IMR-90 (cell line): ENCODE measurements at regions of chr1 and their contacts with region 1.

Region 1: DNA sequence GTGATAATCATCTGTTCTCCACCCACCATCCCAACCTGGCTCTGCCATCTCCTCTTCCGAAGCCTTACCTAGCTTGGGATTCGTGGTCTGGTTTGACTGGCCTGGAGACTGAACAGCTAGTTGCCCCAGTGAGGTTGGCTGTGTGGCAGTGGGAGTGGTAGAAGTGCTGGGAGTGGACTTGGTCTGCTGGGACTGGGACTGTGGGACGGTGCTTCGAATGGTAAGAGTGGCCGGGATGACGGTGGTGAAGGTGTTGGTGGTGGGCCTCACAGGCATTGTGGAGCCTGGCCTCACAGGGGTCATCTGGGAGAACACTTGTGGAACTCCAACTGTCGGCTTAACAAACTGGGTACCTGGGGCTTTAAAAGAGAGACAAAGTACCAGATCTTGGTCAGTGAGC is 28.7 kb downstream of the PSMB4 start:
- DNase-seq: no peak
- ATAC-seq: no peak
- H3K4me3 ChIP-seq: no peak overlapping the region
- H3K27ac ChIP-seq: no peak overlapping the region
- H3K4me1 ChIP-seq: no peaks in the 10 kb centered on the region
- H3K27me3 ChIP-seq: no peaks in the 10 kb centered on the region
- CTCF ChIP-seq: no peak
- POLR2A ChIP-seq: no peak
- RAD21 ChIP-seq: no peak

Region 2: GRCh38 chr1:151416231-151416904 is 11.7 kb before region 1 on chr1:
- CTCF ChIA-PET with region 1: no interaction called
- POLR2A ChIA-PET with region 1: interaction called, 10 read pairs
- dilution Hi-C with region 1: no loop called
- in situ Hi-C with region 1: no loop called
- intact Hi-C with region 1: no loop called
- DNase-seq: peak; percentile 87
- ATAC-seq: peak; percentile 94
- H3K4me3 ChIP-seq: no peak overlapping the region
- H3K27ac ChIP-seq: peak overlapping the region; percentile 19; the same call in 1 of the 2 replicates
- H3K4me1 ChIP-seq: peaks cover 3% of the 10 kb centered on the region; the same call in 1 of the 2 replicates
- H3K27me3 ChIP-seq: no peaks in the 10 kb centered on the region
- CTCF ChIP-seq: no peak
- POLR2A ChIP-seq: no peak
- RAD21 ChIP-seq: peak; percentile 10; the same call in 1 of the 2 replicates